ENCODE measurements at regions of chr7 and their contacts with region 1.

Region 1: DNA sequence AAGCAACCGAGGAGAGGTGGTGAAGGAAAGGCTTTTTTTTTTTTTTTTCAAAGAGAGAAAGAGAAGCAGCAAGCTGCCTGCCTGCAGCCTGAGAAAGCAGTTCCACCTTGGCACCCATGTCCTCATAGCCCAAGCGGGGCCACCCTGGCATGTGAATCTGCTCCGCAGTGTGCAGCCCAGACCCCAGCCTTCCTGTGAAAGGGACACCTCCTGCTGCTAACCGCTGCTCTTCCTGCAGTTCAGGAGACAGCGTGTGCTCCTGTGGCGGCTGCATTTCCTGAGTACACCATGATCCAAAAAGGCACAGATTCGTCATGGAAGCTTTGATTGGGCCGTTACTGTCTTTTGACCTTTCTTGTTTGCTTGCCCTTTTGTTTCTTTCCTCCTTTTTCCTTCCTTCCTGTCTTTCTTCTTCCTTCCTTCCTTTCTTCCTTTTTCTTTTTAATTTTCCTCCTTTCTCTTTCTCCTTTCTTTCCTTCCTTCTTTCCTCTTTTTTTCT is 38.1 kb downstream of the IKZF1 start:
- DNase-seq: peak in 8 of 14 experiments; percentile 42 to 90 (median 70)
- ATAC-seq: peak; percentile 54
- H3K4me3 ChIP-seq: peak overlapping the region; percentile 17
- H3K4me3 Mint-ChIP-seq: peak overlapping the region; percentile 84
- H3K27ac ChIP-seq: peak overlapping the region; percentile 76 to 78
- H3K27ac Mint-ChIP-seq: no peak overlapping the region
- H3K4me1 ChIP-seq: peaks cover 85% of the 10 kb centered on the region
- H3K4me1 Mint-ChIP-seq: peaks cover 80% of the 10 kb centered on the region
- H3K27me3 ChIP-seq: no peaks in the 10 kb centered on the region
- H3K27me3 Mint-ChIP-seq: no peaks in the 10 kb centered on the region
- CTCF ChIP-seq: no peak

Region 2: DNA sequence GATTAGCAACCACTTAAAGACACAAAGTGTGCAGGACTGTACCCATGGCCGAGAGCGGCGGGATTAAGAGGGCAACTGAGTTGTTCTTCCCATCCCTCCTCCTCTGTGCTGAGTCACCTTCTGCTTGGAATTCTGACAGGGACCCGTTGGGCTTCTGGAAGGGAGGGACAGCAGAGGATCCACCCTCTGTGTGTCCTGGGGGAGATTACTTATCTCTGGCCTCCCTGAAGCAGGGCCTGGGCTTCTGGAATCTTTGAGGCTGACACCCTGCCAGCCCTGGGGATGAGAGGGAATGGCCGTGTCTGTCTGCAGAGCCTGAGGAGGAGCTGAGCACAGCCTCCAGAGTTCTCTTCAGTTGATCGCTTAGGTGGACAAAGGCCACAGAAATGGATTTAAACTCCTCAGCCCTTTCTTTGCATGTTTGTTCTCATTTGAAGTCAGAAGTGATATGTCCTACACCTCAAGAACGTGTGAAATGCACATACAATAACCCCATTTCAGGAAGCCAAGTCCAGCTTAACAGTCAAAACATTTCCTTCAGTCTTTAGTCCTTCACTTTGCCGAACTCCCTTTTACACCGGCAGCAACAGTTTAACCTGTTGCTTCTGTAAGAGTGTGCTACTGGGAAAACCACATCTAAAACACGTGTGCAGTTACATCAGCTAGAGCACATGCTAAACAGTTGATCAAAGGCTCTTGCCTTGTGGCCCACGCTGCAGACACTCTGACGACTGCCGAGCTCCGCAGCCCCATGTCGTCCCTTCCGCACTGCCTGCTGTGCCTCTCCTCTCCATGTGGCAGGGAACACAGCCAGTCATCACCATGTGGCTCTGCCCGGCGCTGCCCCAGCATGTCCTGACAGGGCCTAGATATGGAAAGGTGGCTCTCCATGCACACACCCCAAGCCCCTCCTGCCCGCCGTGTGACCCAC is 17.6 kb after region 1 on chr7:
- CTCF ChIA-PET with region 1: interaction called, 5 read pairs
- POLR2A ChIA-PET with region 1: interaction called, 962 read pairs
- intact Hi-C with region 1: loop called in 1 of 2 experiments (anchors 2 kb)
- DNase-seq: peak; percentile 71 to 96 (median 79)
- ATAC-seq: peak; percentile 86
- H3K4me3 ChIP-seq: peak overlapping the region; percentile 17
- H3K4me3 Mint-ChIP-seq: peak overlapping the region; percentile 76
- H3K27ac ChIP-seq: peak overlapping the region; percentile 86 to 96
- H3K27ac Mint-ChIP-seq: no peak overlapping the region
- H3K4me1 ChIP-seq: peaks cover 96% of the 10 kb centered on the region
- H3K4me1 Mint-ChIP-seq: peaks cover 96% of the 10 kb centered on the region
- H3K27me3 ChIP-seq: no peaks in the 10 kb centered on the region
- H3K27me3 Mint-ChIP-seq: no peaks in the 10 kb centered on the region
- CTCF ChIP-seq: no peak